Transverse colon (tissue), 4 donors: ENCODE measurements at regions of chr5 and their contacts with region 1.

Region 1: GRCh38 chr5:79020861-79021561 is 35.9 kb upstream of the ARSB start:
- DNase-seq: peak; percentile 49
- H3K4me3 ChIP-seq: no peak overlapping the region
- H3K27ac ChIP-seq: peak overlapping the region in 1 of 4 donors; percentile 19
- H3K4me1 ChIP-seq: peaks cover 0 to 21% (median 5%) of the 10 kb centered on the region in 4 donors
- H3K27me3 ChIP-seq: peaks cover 5% of the 10 kb centered on the region
- CTCF ChIP-seq: peak; percentile 58 to 73 (median 71)
- EP300 ChIP-seq: no peak
- POLR2A ChIP-seq: no peak

Region 2: GRCh38 chr5:79133657-79134451 is 112.8 kb after region 1 on chr5:
- in situ Hi-C with region 1: loop called (anchors 10 to 25 kb)
- intact Hi-C with region 1: loop called (anchors 5 kb)
- DNase-seq: peak; percentile 69
- H3K4me3 ChIP-seq: peak overlapping the region in 3 of 4 donors; percentile 6 to 30 (median 7)
- H3K27ac ChIP-seq: peak overlapping the region; percentile 68 to 81 (median 78)
- H3K4me1 ChIP-seq: peaks cover 0 to 14% (median 8%) of the 10 kb centered on the region in 4 donors
- H3K27me3 ChIP-seq: no peaks in the 10 kb centered on the region
- CTCF ChIP-seq: peak; percentile 61 to 73 (median 65)
- EP300 ChIP-seq: no peak
- POLR2A ChIP-seq: no peak

Region 3: GRCh38 chr5:79235634-79236363 is 214.8 kb after region 1 on chr5 and contains the start of gene JMY:
- in situ Hi-C with region 1: no loop called
- intact Hi-C with region 1: loop called (anchors 10 kb)
- DNase-seq: peak; percentile 90
- H3K4me3 ChIP-seq: peak within 1 kb of the TSS; percentile 69 to 93 (median 74)
- H3K27ac ChIP-seq: peak within 1 kb of the TSS; percentile 92 to 96 (median 94)
- H3K4me1 ChIP-seq: peaks cover 4 to 38% (median 14%) of the 10 kb centered on the region in 4 donors
- H3K27me3 ChIP-seq: no peaks in the 10 kb centered on the region
- CTCF ChIP-seq: no peak
- EP300 ChIP-seq: no peak
- POLR2A ChIP-seq: peak; percentile 80
- total RNA-seq, gene JMY: 7.8 to 25.1 (median 14.7) TPM

Region 4: DNA sequence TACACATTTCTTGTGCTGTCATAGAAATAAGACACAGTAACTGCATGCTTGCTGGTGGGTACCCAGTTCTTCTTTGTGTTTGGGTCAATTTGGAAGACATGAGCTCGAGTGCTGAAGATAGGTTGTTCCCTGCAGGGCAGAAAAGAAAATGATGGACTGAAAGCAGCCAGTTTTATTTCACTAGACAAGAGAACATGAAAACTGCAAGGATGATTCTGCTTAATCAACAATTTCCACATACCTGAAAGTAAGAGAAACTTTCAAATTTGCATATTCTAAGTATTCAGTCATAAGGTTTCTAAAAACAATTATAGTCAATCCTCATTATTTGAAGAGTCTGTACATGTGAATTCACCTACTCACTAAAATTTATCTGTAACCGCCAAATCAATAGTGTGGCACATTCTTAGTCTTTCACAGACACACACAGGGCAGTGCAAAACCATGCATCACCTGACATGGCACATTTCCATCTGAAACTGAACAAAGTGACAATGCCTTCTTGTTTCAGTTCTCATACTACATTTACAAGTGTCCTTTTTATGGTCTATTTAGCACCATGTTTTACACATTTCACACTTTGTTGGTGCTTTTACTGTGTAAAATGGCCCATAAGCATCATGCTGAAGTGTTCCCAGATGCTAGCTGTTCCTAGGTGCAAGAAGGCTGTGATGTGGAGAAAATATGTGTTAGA is 436.0 kb after region 1 on chr5:
- in situ Hi-C with region 1: loop called in 3 of 4 experiments (anchors 10 to 25 kb)
- intact Hi-C with region 1: no loop called
- DNase-seq: no peak
- H3K4me3 ChIP-seq: no peak overlapping the region
- H3K27ac ChIP-seq: no peak overlapping the region
- H3K4me1 ChIP-seq: no peaks in the 10 kb centered on the region
- H3K27me3 ChIP-seq: no peaks in the 10 kb centered on the region
- CTCF ChIP-seq: no peak
- EP300 ChIP-seq: no peak
- POLR2A ChIP-seq: no peak

Region 5: GRCh38 chr5:79464695-79465332 is 443.8 kb after region 1 on chr5:
- in situ Hi-C with region 1: loop called in 2 of 4 experiments (anchors 25 kb)
- intact Hi-C with region 1: loop called (anchors 5 kb)
- DNase-seq: no peak
- H3K4me3 ChIP-seq: no peak overlapping the region
- H3K27ac ChIP-seq: no peak overlapping the region
- H3K4me1 ChIP-seq: no peaks in the 10 kb centered on the region
- H3K27me3 ChIP-seq: no peaks in the 10 kb centered on the region
- CTCF ChIP-seq: peak; percentile 56 to 63 (median 59)
- EP300 ChIP-seq: no peak
- POLR2A ChIP-seq: no peak